Psoas muscle (tissue), 8 donors: ENCODE measurements at regions of chr14 and their contacts with region 1.

Region 1: DNA sequence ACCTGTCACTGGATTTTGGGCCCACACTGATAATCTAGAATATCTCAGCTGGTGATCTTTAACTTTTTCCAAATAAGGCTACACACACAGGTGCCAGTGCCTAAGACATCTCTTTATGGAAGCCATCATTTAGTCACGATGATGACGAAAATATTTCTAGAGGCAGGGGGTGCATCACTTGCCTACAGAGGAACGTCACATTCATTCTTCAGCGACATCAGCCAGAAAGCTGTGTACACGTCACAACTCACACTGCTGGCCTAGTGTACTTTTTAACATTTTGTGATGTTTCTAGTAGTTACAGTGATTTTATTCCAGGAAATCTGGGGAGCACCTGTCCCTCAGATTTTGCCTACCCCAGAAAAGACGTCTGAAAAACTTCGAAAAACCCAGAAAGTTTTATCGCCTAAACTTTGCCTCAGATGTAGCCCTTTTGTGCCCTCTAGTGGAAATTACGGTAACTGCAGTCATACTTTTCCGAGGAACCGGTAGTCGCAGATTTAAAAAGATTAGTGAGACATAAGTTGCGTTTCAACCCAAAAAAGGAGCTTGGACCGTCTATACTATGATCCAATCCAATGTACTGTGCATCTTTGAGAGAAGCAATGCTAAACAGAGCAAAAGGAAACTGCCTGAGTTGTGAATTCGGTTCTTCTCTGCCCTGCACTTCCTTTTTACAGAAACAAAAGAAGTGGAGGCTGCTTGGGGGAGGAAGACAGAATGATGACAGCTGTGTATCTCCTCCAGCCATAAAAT is 64.3 kb upstream of the STON2 start:
- DNase-seq: no peak
- ATAC-seq: peak in 3 of 4 donors; percentile 54 to 72 (median 58)
- H3K4me3 ChIP-seq: peak overlapping the region; percentile 69
- H3K27ac ChIP-seq: peak overlapping the region; percentile 53
- H3K4me1 ChIP-seq: no peaks in the 10 kb centered on the region
- H3K27me3 ChIP-seq: no peaks in the 10 kb centered on the region
- CTCF ChIP-seq: peak; percentile 91

Region 2: DNA sequence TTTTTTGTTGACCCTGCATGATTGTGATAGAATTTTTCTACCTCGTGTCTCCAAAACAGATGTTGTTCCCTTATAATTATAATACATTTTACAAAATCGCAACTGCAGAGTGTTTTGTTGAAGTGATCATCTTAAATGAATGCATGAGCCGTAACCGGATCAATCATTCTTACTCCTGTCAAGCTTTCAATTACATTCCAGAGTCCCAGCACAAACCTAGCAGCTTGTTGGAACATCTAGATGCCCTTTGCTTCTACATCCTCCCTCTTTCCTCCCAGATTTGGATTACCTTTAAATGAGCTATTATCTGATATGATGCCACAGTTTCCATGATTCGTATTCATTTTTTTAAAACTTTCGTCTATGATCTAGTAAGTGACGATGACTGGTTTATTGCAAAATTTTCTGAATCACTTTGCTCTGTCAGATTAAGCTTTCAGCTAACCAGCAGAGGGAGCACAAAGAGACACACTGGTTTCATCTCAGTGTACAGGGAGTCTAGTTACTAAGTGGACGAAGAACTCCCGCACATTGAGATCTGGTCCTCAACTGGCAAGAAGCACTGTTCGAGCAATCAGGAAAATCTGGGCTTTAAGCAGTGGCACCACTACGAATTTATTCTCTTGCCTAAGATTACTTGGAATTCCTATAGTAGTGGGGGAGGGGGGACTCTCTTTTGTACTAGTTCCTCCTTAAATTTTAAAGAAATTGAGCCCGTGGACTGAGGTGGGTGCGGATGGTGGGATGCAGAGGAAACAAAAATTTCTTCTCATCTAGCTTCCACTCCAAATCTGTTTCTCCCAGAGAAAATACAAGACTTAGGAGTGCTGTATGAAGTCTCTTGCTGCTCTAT is 468.1 kb before region 1 on chr14:
- intact Hi-C with region 1: loop called in 1 of 2 experiments (anchors 5 kb)
- DNase-seq: no peak
- ATAC-seq: peak; percentile 85 to 99 (median 96)
- H3K4me3 ChIP-seq: peak overlapping the region; percentile 33
- H3K27ac ChIP-seq: no peak overlapping the region
- H3K4me1 ChIP-seq: no peaks in the 10 kb centered on the region
- H3K27me3 ChIP-seq: no peaks in the 10 kb centered on the region
- CTCF ChIP-seq: peak; percentile 71

Region 3: DNA sequence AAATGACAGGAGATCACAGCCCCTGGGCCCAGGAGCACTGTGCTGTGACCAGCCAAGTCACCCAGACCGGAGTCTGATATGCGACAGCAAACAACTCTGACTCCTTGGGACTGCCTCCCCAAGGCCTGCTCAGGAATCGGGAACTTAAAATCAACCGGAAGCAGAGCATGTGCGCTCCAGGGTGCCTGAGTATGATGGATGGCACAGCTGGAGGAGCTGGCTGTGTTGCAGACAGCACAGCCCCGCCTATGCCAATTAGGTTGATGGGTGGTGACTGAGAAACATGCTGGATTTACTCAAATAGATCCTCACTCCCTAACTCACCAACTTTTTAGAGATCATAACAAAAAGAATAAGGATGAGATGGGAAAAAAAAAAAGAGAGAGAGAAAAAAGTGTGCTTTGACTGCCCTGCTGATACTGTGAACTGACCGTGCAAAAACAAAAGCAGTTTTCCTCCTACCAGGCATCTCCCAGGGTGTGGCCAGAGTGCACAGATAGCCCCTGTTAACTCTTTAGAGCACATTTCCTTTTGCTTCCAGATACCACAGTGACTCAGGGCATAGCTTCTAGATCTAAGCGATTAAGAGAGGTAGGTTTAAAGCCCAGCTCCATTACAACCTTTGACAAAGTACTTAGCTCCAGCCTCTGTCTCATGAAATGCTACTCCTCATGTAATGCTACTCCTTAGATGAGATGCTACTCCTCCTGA is 36.9 kb before region 1 on chr14:
- intact Hi-C with region 1: no loop called
- DNase-seq: peak; percentile 49 to 72
- ATAC-seq: peak; percentile 73 to 84 (median 75)
- H3K4me3 ChIP-seq: peak overlapping the region; percentile 3
- H3K27ac ChIP-seq: peak overlapping the region; percentile 34
- H3K4me1 ChIP-seq: peaks cover 35% of the 10 kb centered on the region
- H3K27me3 ChIP-seq: no peaks in the 10 kb centered on the region
- CTCF ChIP-seq: no peak

Region 4: DNA sequence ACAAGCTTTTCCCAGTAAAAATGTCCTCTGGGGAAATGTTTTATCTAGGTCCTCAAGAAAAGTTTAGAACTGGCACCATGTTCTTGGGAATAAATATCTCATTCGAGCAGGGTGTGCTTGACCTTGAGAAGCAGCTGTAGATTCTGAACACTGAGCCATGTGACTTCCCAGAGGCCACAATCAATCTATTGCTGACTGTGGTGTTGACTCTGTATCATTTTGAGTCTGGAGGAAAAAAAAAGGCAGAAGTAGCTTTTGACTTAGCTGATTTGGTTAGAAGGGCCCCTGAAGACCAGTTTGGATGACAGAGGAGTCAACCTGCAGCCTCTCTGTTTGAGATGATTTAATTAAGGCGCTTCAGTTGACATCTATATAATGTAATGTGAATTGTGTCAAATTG is 661.6 kb after region 1 on chr14:
- intact Hi-C with region 1: no loop called
- DNase-seq: no peak
- ATAC-seq: no peak
- H3K4me3 ChIP-seq: no peak overlapping the region
- H3K27ac ChIP-seq: no peak overlapping the region
- H3K4me1 ChIP-seq: no peaks in the 10 kb centered on the region
- H3K27me3 ChIP-seq: no peaks in the 10 kb centered on the region
- CTCF ChIP-seq: no peak